ENCODE measurements at regions of chr6 and their contacts with region 1.

Region 1: GRCh38 chr6:42043787-42044475 is 6.4 kb upstream of the TAF8 start:
- DNase-seq: peak; percentile 76
- H3K4me3 ChIP-seq: no peak overlapping the region
- H3K27ac ChIP-seq: peak overlapping the region; percentile 4
- H3K4me1 ChIP-seq: peaks cover 39% of the 10 kb centered on the region
- H3K27me3 ChIP-seq: no peaks in the 10 kb centered on the region
- CTCF ChIP-seq: peak; percentile 94 to 99

Region 2: GRCh38 chr6:41713161-41713649 is 330.7 kb before region 1 on chr6:
- CTCF ChIA-PET with region 1: no interaction called
- dilution Hi-C with region 1: no loop called
- in situ Hi-C with region 1: no loop called
- intact Hi-C with region 1: loop called (anchors 10 kb)
- DNase-seq: peak; percentile 96
- H3K4me3 ChIP-seq: peak overlapping the region in 1 of 3 experiments; percentile 1
- H3K27ac ChIP-seq: peak overlapping the region; percentile 51
- H3K4me1 ChIP-seq: peaks cover 51% of the 10 kb centered on the region
- H3K27me3 ChIP-seq: no peaks in the 10 kb centered on the region
- CTCF ChIP-seq: no peak

Region 3: GRCh38 chr6:41787219-41787917 is 256.6 kb before region 1 on chr6 and contains the start of gene TOMM6:
- CTCF ChIA-PET with region 1: interaction called, 5 read pairs
- dilution Hi-C with region 1: loop called (anchors 5 kb)
- in situ Hi-C with region 1: loop called (anchors 5 to 10 kb)
- intact Hi-C with region 1: no loop called
- DNase-seq: peak; percentile 92
- H3K4me3 ChIP-seq: peak within 1 kb of the TSS; percentile 63 to 98 (median 97)
- H3K27ac ChIP-seq: peak within 1 kb of the TSS; percentile 95
- H3K4me1 ChIP-seq: peaks cover 20% of the 10 kb centered on the region
- H3K27me3 ChIP-seq: no peaks in the 10 kb centered on the region
- CTCF ChIP-seq: peak; percentile 76 to 90
- total RNA-seq, gene TOMM6: 59.7 to 175 TPM

Region 4: DNA sequence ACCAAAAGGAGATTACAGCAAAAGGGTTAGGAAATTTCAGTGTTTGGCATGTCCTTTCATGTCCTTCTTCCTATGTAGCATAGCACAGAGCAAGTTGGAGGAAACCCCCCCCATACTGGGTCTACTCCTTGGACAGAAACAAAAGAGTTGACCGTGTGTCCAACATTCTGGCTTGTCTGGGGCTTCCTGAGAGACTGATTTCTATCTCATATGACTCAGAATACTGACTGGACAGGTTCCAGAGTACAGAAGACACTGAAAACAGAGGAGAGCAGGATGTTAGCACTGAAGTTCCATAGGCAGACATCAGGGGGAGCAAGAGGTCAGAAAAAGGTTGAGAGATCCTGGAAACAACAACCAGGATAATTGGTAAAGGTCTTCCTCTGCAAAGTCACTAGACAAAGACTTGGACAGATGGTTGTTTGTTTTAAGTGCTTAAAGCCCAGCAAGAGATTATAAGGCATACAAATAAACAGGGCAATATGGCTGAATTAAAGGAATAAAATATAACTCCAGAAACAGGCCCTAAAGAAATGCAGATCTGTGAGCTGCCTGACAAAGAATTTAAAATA is 197.2 kb before region 1 on chr6:
- CTCF ChIA-PET with region 1: interaction called, 5 read pairs
- dilution Hi-C with region 1: no loop called
- in situ Hi-C with region 1: loop called in 1 of 2 experiments (anchors 10 kb)
- intact Hi-C with region 1: loop called (anchors 1 kb)
- DNase-seq: peak; percentile 98
- H3K4me3 ChIP-seq: peak overlapping the region in 1 of 3 experiments; percentile 1
- H3K27ac ChIP-seq: peak overlapping the region; percentile 74
- H3K4me1 ChIP-seq: peaks cover 13% of the 10 kb centered on the region
- H3K27me3 ChIP-seq: no peaks in the 10 kb centered on the region
- CTCF ChIP-seq: peak; percentile 92 to 93

Region 5: DNA sequence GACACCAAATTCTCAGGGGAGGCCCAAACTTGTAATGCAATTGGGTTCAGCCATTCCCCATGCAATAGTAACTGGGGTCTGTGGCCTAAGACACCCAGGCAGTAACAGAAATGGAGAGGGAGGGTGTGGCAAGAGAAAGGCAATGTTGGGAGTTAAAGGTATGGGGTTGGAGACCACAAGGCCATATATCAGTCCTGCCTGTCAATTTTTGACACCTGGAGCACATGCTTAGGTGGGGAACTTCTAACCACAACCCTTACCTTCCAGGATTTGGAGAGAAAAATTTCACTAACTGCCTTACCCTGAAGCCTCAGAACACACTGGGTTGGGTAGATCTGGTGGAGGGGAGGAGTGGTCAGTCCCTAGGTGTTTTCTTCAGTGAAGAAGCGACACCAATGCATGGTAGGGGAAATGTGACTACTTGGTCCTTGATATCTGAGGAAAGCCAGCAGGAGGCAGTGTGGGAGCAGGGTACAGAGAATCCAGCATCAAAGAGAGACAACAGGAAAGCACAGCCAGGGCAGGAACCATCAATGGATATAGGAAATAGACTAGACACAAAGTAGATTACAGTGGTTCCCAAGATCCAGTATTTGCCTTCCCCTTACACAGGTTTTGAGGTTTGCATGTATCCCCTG is 141.9 kb before region 1 on chr6:
- CTCF ChIA-PET with region 1: no interaction called
- dilution Hi-C with region 1: no loop called
- in situ Hi-C with region 1: no loop called
- intact Hi-C with region 1: loop called (anchors 1 kb)
- DNase-seq: no peak
- H3K4me3 ChIP-seq: no peak overlapping the region
- H3K27ac ChIP-seq: no peak overlapping the region
- H3K4me1 ChIP-seq: no peaks in the 10 kb centered on the region
- H3K27me3 ChIP-seq: no peaks in the 10 kb centered on the region
- CTCF ChIP-seq: peak; percentile 32 to 43

Region 6: GRCh38 chr6:41936073-41936837 is 107.7 kb before region 1 on chr6:
- CTCF ChIA-PET with region 1: interaction called, 6 read pairs
- dilution Hi-C with region 1: no loop called
- in situ Hi-C with region 1: loop called in 1 of 2 experiments (anchors 5 kb)
- intact Hi-C with region 1: loop called (anchors 1 kb)
- DNase-seq: peak; percentile 80
- H3K4me3 ChIP-seq: no peak overlapping the region
- H3K27ac ChIP-seq: no peak overlapping the region
- H3K4me1 ChIP-seq: peaks cover 34% of the 10 kb centered on the region
- H3K27me3 ChIP-seq: no peaks in the 10 kb centered on the region
- CTCF ChIP-seq: peak; percentile 85 to 95

Region 7: DNA sequence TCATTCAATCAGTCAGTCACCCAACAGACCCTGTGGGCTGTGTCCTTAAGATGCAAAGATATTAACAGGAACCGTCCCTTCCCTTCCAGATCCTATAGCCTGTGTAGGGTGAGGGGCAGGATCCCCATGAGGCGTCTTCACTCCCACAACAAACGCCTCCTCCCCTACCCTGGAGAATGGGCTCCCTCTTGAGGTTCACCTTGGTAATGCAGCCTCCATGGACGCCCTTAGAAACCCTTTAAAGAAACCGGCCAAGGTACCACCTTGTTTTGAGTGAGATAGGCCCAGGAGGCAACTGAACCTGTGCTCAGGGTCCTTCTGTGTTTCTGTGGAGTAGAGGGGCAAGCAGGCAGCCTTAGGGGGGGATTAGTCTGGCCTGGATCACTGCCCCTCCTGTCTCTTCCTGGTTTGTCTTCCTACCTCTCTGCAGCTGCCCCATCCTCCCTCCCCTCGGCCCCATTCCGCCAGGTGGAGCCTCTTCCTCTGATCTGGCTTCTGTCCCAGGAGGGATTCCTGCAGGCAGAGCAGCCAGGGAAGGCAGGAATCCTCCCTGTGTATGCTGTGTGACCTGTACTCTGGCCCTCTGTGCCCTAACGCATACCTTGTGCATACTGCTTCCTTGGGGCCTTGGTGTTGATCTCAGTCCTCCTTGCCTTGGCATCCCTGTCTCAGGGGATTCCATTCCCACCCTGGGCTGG is 122.7 kb after region 1 on chr6:
- CTCF ChIA-PET with region 1: no interaction called
- dilution Hi-C with region 1: no loop called
- in situ Hi-C with region 1: no loop called
- intact Hi-C with region 1: loop called (anchors 1 kb)
- DNase-seq: peak; percentile 78
- H3K4me3 ChIP-seq: no peak overlapping the region
- H3K27ac ChIP-seq: no peak overlapping the region
- H3K4me1 ChIP-seq: peaks cover 8% of the 10 kb centered on the region
- H3K27me3 ChIP-seq: no peaks in the 10 kb centered on the region
- CTCF ChIP-seq: peak; percentile 83 to 96